Calu3 (cell line): ENCODE measurements at regions of chr1 and their contacts with region 1.

Region 1: DNA sequence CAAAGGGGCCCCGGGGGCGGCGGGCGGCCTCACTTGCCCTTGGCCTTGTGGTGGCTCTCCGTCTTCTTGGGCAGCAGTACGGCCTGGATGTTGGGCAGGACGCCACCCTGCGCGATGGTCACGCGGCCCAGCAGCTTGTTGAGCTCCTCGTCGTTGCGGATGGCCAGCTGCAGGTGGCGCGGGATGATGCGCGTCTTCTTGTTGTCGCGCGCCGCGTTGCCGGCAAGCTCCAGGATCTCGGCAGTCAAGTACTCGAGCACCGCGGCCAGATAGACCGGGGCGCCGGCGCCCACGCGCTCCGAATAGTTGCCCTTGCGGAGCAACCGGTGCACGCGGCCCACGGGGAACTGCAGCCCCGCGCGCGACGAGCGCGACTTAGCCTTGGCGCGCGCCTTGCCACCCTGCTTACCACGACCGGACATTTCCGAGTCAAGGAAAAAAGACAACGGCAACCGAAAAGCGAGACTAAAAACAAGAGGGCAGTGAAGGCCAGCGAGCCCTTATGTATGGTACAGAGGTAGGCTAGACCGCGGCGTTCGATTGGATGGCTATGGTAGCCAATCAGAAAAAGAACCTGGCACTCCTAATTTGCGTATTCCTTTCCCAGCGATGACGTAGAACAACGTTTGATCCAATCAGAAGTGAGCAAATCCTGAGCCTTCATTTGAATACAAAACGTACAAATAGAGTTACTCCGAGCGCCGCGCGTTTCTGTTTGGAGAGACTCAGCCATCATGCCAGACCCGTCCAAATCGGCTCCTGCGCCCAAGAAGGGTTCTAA is 29.6 kb upstream of the RNF187 start:
- DNase-seq: peak; percentile 92
- H3K4me3 Mint-ChIP-seq: peak overlapping the region; percentile 87
- H3K27ac Mint-ChIP-seq: peak overlapping the region; percentile 98
- H3K4me1 Mint-ChIP-seq: peaks cover 25% of the 10 kb centered on the region
- H3K27me3 Mint-ChIP-seq: peaks cover 24% of the 10 kb centered on the region
- CTCF ChIP-seq: peak; percentile 25

Region 2: GRCh38 chr1:228226956-228227791 is 230.4 kb before region 1 on chr1:
- CTCF ChIA-PET with region 1: no interaction called
- intact Hi-C with region 1: loop called (anchors 5 kb)
- DNase-seq: peak; percentile 67
- H3K4me3 Mint-ChIP-seq: peak overlapping the region; percentile 42
- H3K27ac Mint-ChIP-seq: no peak overlapping the region
- H3K4me1 Mint-ChIP-seq: peaks cover 20% of the 10 kb centered on the region
- H3K27me3 Mint-ChIP-seq: no peaks in the 10 kb centered on the region
- CTCF ChIP-seq: peak; percentile 48

Region 3: GRCh38 chr1:228379666-228380065 is 77.9 kb before region 1 on chr1:
- CTCF ChIA-PET with region 1: interaction called, 7 read pairs
- intact Hi-C with region 1: loop called (anchors 5 kb)
- DNase-seq: no peak
- H3K4me3 Mint-ChIP-seq: peak overlapping the region; percentile 74
- H3K27ac Mint-ChIP-seq: no peak overlapping the region
- H3K4me1 Mint-ChIP-seq: no peaks in the 10 kb centered on the region
- H3K27me3 Mint-ChIP-seq: no peaks in the 10 kb centered on the region
- CTCF ChIP-seq: no peak

Region 4: GRCh38 chr1:228416217-228416933 is 41.2 kb before region 1 on chr1 and contains the start of gene TRIM17:
- CTCF ChIA-PET with region 1: interaction called, 5 read pairs
- intact Hi-C with region 1: loop called (anchors 5 kb)
- DNase-seq: peak; percentile 75
- H3K4me3 Mint-ChIP-seq: peak within 1 kb of the TSS; percentile 73
- H3K27ac Mint-ChIP-seq: peak within 1 kb of the TSS; percentile 90
- H3K4me1 Mint-ChIP-seq: peaks cover 34% of the 10 kb centered on the region
- H3K27me3 Mint-ChIP-seq: no peaks in the 10 kb centered on the region
- CTCF ChIP-seq: peak; percentile 55
- total RNA-seq, gene TRIM17: 2.3 and 3.8 TPM in 2 replicates